Calu3 (cell line): ENCODE measurements at regions of chr2 and their contacts with region 1.

Region 1: DNA sequence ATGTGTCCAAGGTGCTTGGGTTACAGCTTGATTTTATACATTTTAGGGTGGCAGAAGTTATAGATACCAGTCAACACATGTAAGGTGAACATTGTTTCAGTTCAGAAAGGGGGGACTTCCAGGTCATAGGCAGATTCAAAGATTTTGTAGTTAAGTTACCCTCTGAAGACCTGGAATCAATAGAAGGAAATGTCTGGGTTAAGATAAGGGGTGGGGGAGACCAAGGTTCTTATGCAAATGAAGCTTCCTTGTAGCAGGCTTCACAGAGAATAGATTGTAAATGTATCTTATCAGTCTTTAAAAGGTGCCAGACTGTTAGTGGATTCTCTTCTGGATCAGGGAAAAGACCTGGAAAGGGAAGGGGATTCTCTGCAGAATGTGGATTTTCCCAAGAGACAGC is 42.4 kb downstream of the BMPR2 start:
- DNase-seq: no peak
- H3K4me3 Mint-ChIP-seq: no peak overlapping the region
- H3K27ac Mint-ChIP-seq: no peak overlapping the region
- H3K4me1 Mint-ChIP-seq: peaks cover 12% of the 10 kb centered on the region
- H3K27me3 Mint-ChIP-seq: no peaks in the 10 kb centered on the region
- CTCF ChIP-seq: no peak

Region 2: GRCh38 chr2:202530038-202530437 is 111.5 kb after region 1 on chr2:
- CTCF ChIA-PET with region 1: no interaction called
- intact Hi-C with region 1: loop called (anchors 10 kb)
- DNase-seq: no peak
- H3K4me3 Mint-ChIP-seq: no peak overlapping the region
- H3K27ac Mint-ChIP-seq: no peak overlapping the region
- H3K4me1 Mint-ChIP-seq: peaks cover 7% of the 10 kb centered on the region
- H3K27me3 Mint-ChIP-seq: no peaks in the 10 kb centered on the region
- CTCF ChIP-seq: no peak

Region 3: DNA sequence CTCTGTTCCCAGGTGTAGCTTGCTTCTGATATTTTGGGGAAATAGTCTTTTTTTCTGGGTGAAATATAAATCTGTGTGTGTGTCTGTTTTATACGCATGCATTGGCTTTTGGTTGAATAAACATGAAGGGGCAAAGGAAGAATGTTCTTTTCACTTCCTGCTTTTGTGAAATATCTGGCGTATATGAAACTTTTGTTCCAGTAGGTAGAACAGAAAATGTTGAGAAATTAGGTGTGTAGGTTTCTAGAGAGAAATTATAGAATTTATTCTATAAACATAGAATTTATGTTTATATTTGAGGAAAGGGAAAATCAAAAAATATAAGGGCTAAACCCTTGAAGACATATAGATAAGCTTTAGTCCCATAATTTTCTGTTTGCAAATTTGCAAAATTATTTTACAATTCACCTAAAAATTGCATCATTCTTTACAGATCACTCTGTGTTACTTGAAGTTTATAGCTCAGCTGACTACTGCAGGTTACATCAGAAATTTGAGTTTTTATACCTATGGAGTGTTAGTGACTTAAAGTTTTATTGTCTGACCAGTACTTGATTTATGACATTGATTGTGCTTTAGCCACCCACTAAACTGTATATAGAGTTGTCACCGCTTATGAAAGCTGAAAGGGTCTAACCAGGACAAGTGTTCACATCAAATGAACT is 332.4 kb after region 1 on chr2:
- CTCF ChIA-PET with region 1: no interaction called
- intact Hi-C with region 1: no loop called
- DNase-seq: no peak
- H3K4me3 Mint-ChIP-seq: no peak overlapping the region
- H3K27ac Mint-ChIP-seq: no peak overlapping the region
- H3K4me1 Mint-ChIP-seq: no peaks in the 10 kb centered on the region
- H3K27me3 Mint-ChIP-seq: no peaks in the 10 kb centered on the region
- CTCF ChIP-seq: no peak